Activated CD4-positive, alpha-beta T cell treated with anti-CD3 and anti-CD28 coated beads, Interleukin-2, amount 10 ng/mL, durations not matched to agents 24 days and 14 days (primary cell): ENCODE measurements at regions of chr22 and their contacts with region 1.

Region 1: GRCh38 chr22:20319745-20320658 is at the start of gene DGCR6L:
- DNase-seq: peak; percentile 99
- H3K4me3 Mint-ChIP-seq: peak within 1 kb of the TSS; percentile 97
- H3K27ac Mint-ChIP-seq: peak within 1 kb of the TSS; percentile 84
- H3K4me1 Mint-ChIP-seq: peaks cover 50% of the 10 kb centered on the region
- H3K27me3 Mint-ChIP-seq: no peaks in the 10 kb centered on the region
- total RNA-seq, gene DGCR6L: 37.2 TPM in 2 replicates

Region 2: DNA sequence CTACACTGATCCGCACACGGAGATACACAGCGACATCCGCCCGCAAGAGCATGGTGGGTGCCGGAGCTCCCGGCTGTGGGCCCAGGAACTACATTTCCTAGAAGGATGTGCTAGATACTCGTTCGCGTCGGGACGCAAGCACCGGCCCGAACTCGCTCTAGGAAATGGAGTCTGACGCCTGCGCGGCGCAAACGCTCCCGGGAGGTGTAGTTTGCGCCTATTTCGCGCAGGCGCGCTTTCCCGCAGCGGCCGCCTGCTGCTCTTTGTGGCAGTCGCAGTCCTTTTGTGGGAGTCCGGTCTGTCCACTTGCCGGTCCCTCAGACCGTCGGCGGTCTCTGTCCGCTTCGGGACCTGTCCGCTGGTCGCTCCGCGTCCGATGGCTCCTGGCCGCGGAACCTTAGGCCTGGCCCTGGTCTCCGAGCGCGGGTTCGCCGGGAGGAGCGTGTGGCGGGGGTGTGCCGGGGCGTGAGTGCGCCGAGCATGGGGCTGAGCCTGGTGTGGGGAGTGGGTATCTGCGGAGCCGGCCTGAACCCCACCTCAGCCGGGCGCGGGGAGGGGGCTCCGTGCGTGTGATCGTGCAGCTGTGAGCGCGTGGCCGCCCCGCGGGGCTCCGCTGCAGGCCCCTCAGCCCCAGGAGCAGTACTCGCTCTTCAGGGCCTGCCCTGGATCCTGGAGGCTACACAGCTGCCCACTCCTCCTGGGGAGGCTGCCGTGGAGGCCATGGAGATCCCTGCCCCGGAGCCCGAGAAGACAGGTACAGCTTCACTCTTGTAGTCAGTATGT is 74.1 kb after region 1 on chr22 and contains the start of gene ZNF74:
- intact Hi-C with region 1: loop called (anchors 5 kb)
- DNase-seq: peak; percentile 96
- H3K4me3 Mint-ChIP-seq: peak within 1 kb of the TSS; percentile 89
- H3K27ac Mint-ChIP-seq: peak within 1 kb of the TSS; percentile 89
- H3K4me1 Mint-ChIP-seq: peaks cover 20% of the 10 kb centered on the region
- H3K27me3 Mint-ChIP-seq: no peaks in the 10 kb centered on the region
- total RNA-seq, gene ZNF74: 15.6 and 17.0 TPM in 2 replicates